ENCODE measurements at regions of chr3 and their contacts with region 1.

Region 1: DNA sequence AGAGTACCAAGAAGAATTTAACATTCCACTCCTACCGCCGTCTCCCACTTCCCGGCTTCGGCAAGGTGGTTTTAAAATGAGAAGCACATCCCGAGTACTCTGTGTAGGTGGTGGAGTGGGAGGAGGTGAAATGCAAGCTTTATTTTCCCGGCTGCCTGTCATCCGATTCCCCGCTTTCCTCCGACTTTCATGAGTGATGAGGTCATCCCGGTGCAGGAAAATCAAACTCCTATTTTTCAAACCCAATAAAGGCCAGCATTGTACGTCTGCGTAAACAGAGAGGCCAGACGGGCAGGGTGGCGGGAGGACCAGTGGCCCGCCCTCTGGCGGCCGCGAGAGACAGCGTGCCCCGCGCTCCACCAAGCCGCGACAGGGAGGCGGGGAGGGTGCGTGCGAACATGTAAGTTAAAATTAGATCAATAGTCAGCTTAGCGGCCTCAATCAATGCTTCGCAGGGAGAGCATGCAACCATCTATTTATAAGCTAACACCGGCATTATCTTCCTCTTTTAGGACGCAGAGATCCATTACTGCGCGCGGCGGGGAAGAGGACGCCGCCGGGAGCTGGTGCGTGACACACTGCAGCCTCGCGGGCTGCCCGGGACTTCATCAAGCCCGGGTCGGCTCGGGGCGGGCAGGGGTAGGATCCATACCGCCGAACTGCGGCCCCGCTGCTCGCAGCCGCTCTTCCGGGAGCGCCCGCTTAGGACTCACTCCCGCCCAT is 163.3 kb downstream of the CD47 start:
- DNase-seq: peak; percentile 91
- H3K4me3 ChIP-seq: peak overlapping the region; percentile 64 to 72
- H3K27ac ChIP-seq: no peak overlapping the region; a peak in 1 of 4 replicates
- H3K4me1 ChIP-seq: peaks cover 0 to 3% of the 10 kb centered on the region in 2 experiments; a peak in 1 of 4 replicates
- H3K27me3 ChIP-seq: no peaks in the 10 kb centered on the region
- CTCF ChIP-seq: peak; percentile 98
- EP300 ChIP-seq: peak in 1 of 2 experiments; percentile 8; a peak in 1 of 4 replicates
- RAD21 ChIP-seq: peak; percentile 72

Region 2: DNA sequence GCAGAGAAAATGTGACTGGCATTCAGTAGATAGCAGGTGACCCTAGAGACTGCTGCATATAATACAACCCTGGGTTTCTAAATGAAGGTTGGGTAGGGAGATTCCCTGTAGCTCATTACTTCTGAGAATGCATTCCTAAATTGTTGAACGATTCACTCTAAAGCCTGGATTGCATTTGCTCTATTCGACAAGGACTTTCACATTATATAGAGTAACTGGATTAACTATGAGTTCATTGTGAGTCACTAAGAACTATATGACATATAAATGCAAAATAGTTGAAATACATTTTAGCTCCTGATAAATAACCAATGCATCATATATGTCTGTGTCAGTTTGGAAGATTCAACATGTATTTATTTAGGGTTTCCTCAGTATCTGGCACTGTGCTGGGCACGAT is 845.0 kb before region 1 on chr3:
- CTCF ChIA-PET with region 1: no interaction called
- POLR2A ChIA-PET with region 1: no interaction called
- DNase-seq: no peak
- H3K4me3 ChIP-seq: no peak overlapping the region
- H3K27ac ChIP-seq: no peak overlapping the region
- H3K4me1 ChIP-seq: peaks cover 0 to 8% of the 10 kb centered on the region in 2 experiments; a peak in 1 of 4 replicates
- H3K27me3 ChIP-seq: no peaks in the 10 kb centered on the region
- CTCF ChIP-seq: no peak
- EP300 ChIP-seq: no peak
- RAD21 ChIP-seq: no peak

Region 3: GRCh38 chr3:107235928-107236315 is 691.6 kb before region 1 on chr3:
- CTCF ChIA-PET with region 1: interaction called, 25 read pairs
- POLR2A ChIA-PET with region 1: no interaction called
- DNase-seq: peak; percentile 75
- H3K4me3 ChIP-seq: peak overlapping the region; percentile 37 to 53
- H3K27ac ChIP-seq: peak overlapping the region; percentile 45 to 62; a peak in 3 of 4 replicates
- H3K4me1 ChIP-seq: peaks cover 0 to 10% of the 10 kb centered on the region in 2 experiments; a peak in 2 of 4 replicates
- H3K27me3 ChIP-seq: no peaks in the 10 kb centered on the region
- CTCF ChIP-seq: peak; percentile 95
- EP300 ChIP-seq: no peak
- RAD21 ChIP-seq: peak; percentile 99

Region 4: DNA sequence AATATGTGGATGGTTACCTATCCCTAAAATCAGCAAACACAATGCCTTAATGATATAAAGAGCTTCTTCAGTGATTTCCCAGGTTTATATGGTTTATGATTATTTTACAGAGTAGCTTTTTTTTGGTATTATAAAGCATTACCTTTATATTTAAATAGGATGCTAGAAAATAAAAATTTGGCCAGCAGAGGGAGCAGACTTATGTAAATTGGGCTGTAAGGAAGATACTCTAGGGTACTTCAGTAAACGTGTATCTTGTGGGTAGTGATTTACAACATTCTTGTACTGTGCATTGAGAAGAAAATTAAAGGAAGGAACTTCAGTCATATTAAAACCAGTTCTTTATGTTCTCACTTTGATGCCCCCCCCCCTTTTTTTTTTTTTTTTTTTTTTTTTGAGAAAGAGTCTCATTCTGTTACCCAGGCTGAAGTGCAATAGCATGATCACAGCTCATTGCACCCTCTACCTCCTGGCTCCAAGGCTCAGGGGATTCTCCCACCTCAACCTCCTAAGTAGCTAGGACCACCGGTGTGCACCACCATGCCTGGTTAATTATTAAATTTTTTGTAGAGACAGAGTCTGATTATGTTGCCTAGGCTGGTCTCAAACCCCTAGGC is 236.9 kb before region 1 on chr3:
- CTCF ChIA-PET with region 1: interaction called, 14 read pairs
- POLR2A ChIA-PET with region 1: no interaction called
- DNase-seq: peak; percentile 35
- H3K4me3 ChIP-seq: no peak overlapping the region; a peak in 1 of 4 replicates
- H3K27ac ChIP-seq: no peak overlapping the region
- H3K4me1 ChIP-seq: no peaks in the 10 kb centered on the region; a peak in 1 of 4 replicates
- H3K27me3 ChIP-seq: no peaks in the 10 kb centered on the region
- CTCF ChIP-seq: peak; percentile 77
- EP300 ChIP-seq: no peak
- RAD21 ChIP-seq: peak; percentile 61

Region 5: DNA sequence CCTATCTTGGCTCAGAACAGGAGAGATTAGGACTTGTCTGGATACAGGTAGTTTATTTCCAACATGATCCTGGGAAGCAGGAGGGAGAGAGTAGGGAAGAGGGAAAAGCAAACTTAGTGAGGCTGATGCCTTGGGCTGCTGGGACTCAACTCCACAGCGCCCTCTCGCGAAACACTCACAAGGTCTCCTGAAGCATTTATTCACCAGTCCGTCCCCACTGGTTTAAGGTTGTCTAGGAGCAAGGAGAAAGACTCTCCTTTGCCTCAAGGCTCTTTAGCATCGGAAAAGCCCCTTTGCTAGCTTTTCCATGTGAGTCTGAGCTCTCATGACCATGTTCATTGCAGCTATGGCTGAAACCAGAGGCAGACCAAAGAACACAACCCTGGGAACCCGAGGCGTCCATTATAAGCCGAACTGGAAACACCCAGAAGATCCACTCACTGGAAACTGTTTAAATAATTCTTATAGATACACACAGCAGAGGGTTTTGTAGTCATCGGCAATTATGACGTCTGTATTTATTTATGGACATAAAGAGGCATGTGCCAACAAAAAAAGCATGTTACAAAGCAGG is 81.2 kb before region 1 on chr3:
- CTCF ChIA-PET with region 1: no interaction called
- POLR2A ChIA-PET with region 1: no interaction called
- DNase-seq: no peak
- H3K4me3 ChIP-seq: no peak overlapping the region
- H3K27ac ChIP-seq: no peak overlapping the region
- H3K4me1 ChIP-seq: peaks cover 0 to 2% of the 10 kb centered on the region in 2 experiments; a peak in 1 of 4 replicates
- H3K27me3 ChIP-seq: no peaks in the 10 kb centered on the region
- CTCF ChIP-seq: no peak; the same call in 1 of the 2 replicates
- EP300 ChIP-seq: no peak
- RAD21 ChIP-seq: no peak

Region 6: DNA sequence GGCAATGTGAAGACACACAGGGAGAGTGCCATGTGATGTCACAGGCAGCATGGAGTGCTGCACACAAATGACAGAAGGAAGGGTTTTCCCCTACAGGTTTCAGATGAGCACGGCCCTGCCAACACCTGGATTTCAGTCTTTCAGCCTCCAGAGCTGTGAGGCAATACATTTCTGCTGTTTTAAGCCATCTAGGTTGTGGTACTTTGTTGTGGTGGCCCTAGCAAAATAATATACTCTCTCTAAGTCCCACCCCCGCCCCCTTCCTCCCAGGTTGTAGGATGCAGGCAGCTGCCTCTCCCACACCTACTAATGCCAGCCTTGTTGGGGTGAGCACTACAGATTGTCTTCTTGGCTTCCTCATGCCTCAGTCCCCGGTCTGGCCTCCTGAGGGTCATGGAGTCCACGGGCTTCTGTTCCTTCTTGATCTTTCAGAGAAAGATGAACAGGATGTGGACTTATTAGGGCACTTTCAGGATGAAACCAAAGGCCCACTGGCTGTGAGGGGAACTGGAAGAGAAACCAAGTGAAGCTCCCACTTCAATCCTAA is 16.7 kb before region 1 on chr3:
- CTCF ChIA-PET with region 1: interaction called, 10 read pairs
- POLR2A ChIA-PET with region 1: no interaction called
- DNase-seq: no peak
- H3K4me3 ChIP-seq: no peak overlapping the region
- H3K27ac ChIP-seq: no peak overlapping the region
- H3K4me1 ChIP-seq: no peaks in the 10 kb centered on the region; a peak in 1 of 4 replicates
- H3K27me3 ChIP-seq: no peaks in the 10 kb centered on the region
- CTCF ChIP-seq: no peak
- EP300 ChIP-seq: no peak
- RAD21 ChIP-seq: no peak

Region 7: GRCh38 chr3:107943786-107944523 is 16.4 kb after region 1 on chr3:
- CTCF ChIA-PET with region 1: interaction called, 10 read pairs
- POLR2A ChIA-PET with region 1: no interaction called
- DNase-seq: no peak
- H3K4me3 ChIP-seq: no peak overlapping the region
- H3K27ac ChIP-seq: no peak overlapping the region
- H3K4me1 ChIP-seq: no peaks in the 10 kb centered on the region
- H3K27me3 ChIP-seq: no peaks in the 10 kb centered on the region
- CTCF ChIP-seq: no peak
- EP300 ChIP-seq: no peak
- RAD21 ChIP-seq: no peak

Region 8: DNA sequence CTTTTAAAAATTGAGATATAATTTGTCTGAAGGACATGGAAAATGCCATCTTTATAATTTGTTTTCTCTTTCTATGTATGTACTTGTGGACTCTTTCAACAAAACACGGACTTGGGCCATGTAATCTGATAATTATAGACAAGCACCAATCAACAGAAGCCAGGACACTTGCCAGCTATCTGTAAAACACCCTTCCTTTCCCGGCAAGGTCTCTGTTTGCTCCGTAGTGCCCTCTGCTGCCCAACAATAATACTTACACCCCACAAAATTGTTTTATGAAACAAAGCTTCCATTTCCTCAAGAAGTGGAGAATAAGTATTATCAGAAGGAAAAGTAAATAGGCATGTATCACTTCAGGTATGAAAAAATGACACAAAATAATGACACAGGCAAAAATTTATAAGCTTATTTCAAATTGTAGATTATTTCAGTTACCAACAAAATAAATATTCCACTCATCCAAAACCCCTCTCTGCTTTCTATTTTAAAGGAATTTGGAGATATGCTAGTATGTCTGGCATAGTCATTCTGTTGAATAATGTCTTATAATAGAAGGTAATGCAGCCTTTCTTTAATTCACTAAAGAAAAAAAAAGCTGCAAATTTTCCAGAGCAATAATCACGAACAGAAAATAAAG is 550.1 kb after region 1 on chr3:
- CTCF ChIA-PET with region 1: interaction called, 10 read pairs
- POLR2A ChIA-PET with region 1: no interaction called
- DNase-seq: peak; percentile 38
- H3K4me3 ChIP-seq: no peak overlapping the region
- H3K27ac ChIP-seq: no peak overlapping the region
- H3K4me1 ChIP-seq: peaks cover 0 to 3% of the 10 kb centered on the region in 2 experiments; a peak in 2 of 4 replicates
- H3K27me3 ChIP-seq: no peaks in the 10 kb centered on the region
- CTCF ChIP-seq: peak; percentile 85
- EP300 ChIP-seq: no peak
- RAD21 ChIP-seq: peak; percentile 84

Measured in SK-N-SH (cell line).